SK-N-SH (cell line): ENCODE measurements at regions of chr6 and their contacts with region 1.

Region 1: GRCh38 chr6:157873735-157874344 is 50.8 kb downstream of the SNX9 start:
- DNase-seq: peak; percentile 71
- H3K4me3 ChIP-seq: no peak overlapping the region; a peak in 1 of 4 replicates
- H3K27ac ChIP-seq: no peak overlapping the region
- H3K4me1 ChIP-seq: peaks cover 0 to 2% of the 10 kb centered on the region in 2 experiments; a peak in 1 of 4 replicates
- H3K27me3 ChIP-seq: no peaks in the 10 kb centered on the region
- CTCF ChIP-seq: peak; percentile 87
- EP300 ChIP-seq: no peak
- RAD21 ChIP-seq: peak; percentile 75

Region 2: GRCh38 chr6:157885211-157885788 is 11.5 kb after region 1 on chr6:
- CTCF ChIA-PET with region 1: interaction called, 19 read pairs
- POLR2A ChIA-PET with region 1: no interaction called
- DNase-seq: no peak
- H3K4me3 ChIP-seq: no peak overlapping the region
- H3K27ac ChIP-seq: no peak overlapping the region
- H3K4me1 ChIP-seq: no peaks in the 10 kb centered on the region
- H3K27me3 ChIP-seq: no peaks in the 10 kb centered on the region
- CTCF ChIP-seq: no peak
- EP300 ChIP-seq: no peak
- RAD21 ChIP-seq: no peak

Region 3: DNA sequence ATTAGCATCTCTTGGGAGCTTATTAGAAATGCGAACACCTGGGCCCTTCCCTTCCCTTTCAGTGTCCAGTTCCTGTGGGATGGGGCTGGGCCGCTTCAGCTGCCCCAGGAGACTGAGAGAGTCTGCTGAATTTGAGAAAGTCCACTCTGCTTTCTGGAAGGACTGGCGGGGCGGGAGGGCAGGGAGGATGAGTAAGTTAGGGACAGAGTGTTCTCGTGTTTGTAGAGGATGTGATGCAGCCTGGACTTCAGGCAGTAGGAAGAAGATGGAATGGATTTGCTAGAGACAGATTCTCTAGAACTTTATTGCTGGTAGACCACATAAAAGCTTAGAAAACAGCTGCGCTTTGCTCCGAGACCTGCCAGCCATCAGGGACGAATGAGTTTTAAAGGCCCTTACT is 437.4 kb after region 1 on chr6:
- CTCF ChIA-PET with region 1: no interaction called
- POLR2A ChIA-PET with region 1: no interaction called
- DNase-seq: no peak
- H3K4me3 ChIP-seq: no peak overlapping the region
- H3K27ac ChIP-seq: no peak overlapping the region
- H3K4me1 ChIP-seq: no peaks in the 10 kb centered on the region; a peak in 1 of 4 replicates
- H3K27me3 ChIP-seq: no peaks in the 10 kb centered on the region
- CTCF ChIP-seq: no peak
- EP300 ChIP-seq: no peak
- RAD21 ChIP-seq: no peak